ENCODE measurements at regions of chr7 and their contacts with region 1.

Region 1: GRCh38 chr7:95684037-95684436 is 87.7 kb upstream of the PDK4 start:
- DNase-seq: no peak
- ATAC-seq: peak; percentile 62 to 69

Region 2: DNA sequence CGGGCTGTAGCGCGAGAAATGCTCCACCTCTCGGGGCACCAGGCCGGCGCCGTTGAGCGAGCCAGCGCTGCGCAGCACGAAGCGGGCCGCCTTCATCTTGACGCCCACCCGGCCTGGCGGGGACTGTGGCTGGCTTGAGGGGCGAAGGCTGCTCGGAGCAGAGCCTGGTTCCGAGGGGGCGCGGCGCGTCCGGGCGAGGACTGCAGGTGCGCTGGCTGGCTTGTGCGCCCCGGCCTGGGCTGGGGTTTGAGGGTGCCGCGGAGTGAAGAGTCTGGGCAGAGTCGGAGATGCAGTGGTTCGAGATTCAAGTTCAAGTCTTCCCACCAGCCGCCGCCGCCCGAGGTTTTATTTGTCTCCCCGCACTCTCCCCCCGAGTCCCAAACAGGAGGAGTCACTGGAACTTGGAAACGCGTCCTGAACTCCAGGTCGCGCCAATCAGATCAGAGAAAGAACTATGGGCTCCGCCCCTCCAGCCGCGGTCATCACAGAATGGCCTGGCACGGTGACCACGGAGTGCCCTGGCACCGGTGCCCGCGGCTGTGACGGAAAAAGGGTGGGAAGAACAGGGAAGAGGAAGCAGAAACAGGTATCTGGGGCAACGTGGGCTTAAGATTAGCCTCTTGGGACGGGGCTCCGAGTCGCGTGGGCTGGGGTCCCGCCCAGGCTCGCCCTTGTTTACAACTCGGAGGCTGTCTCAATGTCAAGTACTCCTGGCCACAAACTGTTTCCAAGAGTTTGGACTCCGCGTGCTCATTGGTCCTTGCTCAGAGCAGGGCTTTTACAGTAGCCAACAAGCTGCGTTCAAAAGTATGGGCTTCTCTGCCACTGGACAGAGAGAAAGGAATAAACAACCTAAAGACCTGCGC is 87.6 kb before region 1 on chr7 and contains the start of gene PDK4:
- intact Hi-C with region 1: loop called in 1 of 2 experiments (anchors 5 kb)
- DNase-seq: peak; percentile 96
- ATAC-seq: peak; percentile 96 to 98
- total RNA-seq, gene PDK4: 129 to 528 TPM

Region 3: GRCh38 chr7:95628831-95629439 is 55.1 kb before region 1 on chr7:
- intact Hi-C with region 1: loop called in 1 of 2 experiments (anchors 2 kb)
- DNase-seq: peak; percentile 24
- ATAC-seq: peak; percentile 43 to 63

Measured in left cardiac atrium (tissue), 4 donors.